HCT116 (cell line): ENCODE measurements at regions of chr17 and their contacts with region 1.

Region 1: DNA sequence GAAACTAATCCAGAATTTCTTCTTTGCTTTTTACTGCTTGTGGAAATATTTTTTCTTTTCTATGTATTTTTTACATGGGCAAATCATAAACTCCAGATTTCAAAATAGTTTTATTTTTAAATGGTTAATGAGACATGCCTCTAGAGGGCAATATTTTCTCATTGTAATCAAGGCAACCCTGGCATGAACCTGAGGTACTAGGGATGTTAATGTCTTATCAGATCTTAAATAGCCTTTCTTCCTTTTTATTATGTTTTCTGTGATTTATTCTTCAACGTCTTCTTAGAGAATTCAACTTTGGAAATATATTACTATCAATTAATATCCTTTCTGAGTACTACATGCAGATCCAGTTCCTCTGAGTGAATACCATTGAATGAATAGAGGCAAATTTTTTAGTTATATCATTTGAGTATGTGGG is 324.7 kb downstream of the BCAS3 start:
- DNase-seq: peak; percentile 26
- ATAC-seq: peak; percentile 69
- H3K4me3 ChIP-seq: no peak overlapping the region
- H3K27ac ChIP-seq: no peak overlapping the region
- H3K4me1 ChIP-seq: no peaks in the 10 kb centered on the region
- H3K27me3 ChIP-seq: no peaks in the 10 kb centered on the region
- CTCF ChIP-seq: peak; percentile 49 to 88 (median 77); a peak in 5 of 6 replicates
- POLR2A ChIP-seq: no peak
- RAD21 ChIP-seq: peak; percentile 88

Region 2: DNA sequence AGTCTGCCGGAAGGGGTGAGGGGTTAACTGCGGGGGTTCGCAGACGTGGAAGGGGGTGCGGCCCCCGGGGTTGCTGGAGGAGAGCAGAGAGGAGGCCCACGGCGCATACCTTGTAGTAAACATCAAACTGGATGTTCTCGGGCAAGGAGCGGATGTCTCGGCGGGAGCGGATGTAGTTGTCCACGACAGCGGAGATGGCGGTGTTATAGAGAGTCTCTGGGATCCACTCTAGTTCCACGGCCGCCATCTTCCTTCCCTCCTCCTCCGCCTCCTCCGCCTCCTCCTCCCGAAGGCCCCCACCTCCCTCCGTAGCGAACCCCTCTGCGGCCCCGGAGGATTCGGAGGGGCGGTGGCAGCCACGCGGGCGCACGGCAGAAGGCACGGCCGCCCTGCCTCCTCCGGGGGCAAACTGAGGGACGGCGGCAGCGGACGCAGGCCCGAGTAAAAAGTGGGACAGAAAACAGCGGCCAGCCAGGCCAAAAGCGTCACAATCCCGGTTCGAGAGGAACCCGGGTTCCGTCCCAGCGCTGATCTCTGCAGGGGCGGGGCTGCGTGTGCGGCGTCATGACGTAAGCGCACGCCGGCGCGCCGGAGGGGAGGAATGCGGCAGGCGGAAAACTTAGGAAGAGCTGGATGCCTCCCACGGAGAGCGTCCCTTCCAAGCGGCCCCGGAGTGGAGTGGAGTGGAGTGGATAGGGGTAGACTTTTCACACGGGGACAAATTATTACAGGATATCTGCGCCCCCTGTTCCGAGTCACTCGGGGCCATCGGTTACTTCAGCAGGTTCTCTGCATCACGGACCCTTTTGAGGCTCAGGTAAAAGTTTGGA is 476.4 kb before region 1 on chr17 and contains the start of gene APPBP2:
- CTCF ChIA-PET with region 1: no interaction called
- POLR2A ChIA-PET with region 1: no interaction called
- RAD21 ChIA-PET with region 1: no interaction called
- intact Hi-C with region 1: no loop called
- DNase-seq: peak; percentile 75
- ATAC-seq: peak; percentile 95
- H3K4me3 ChIP-seq: peak within 1 kb of the TSS; percentile 85 to 92
- H3K27ac ChIP-seq: peak within 1 kb of the TSS; percentile 91
- H3K4me1 ChIP-seq: peaks cover 9 to 17% of the 10 kb centered on the region in 2 experiments
- H3K27me3 ChIP-seq: no peaks in the 10 kb centered on the region
- CTCF ChIP-seq: no peak
- POLR2A ChIP-seq: peak; percentile 94
- RAD21 ChIP-seq: no peak
- total RNA-seq, gene APPBP2: 35.8 TPM

Region 3: GRCh38 chr17:61361084-61361483 is 358.8 kb after region 1 on chr17:
- CTCF ChIA-PET with region 1: no interaction called
- POLR2A ChIA-PET with region 1: no interaction called
- RAD21 ChIA-PET with region 1: no interaction called
- intact Hi-C with region 1: loop called (anchors 1 kb)
- DNase-seq: no peak
- ATAC-seq: no peak
- H3K4me3 ChIP-seq: no peak overlapping the region
- H3K27ac ChIP-seq: no peak overlapping the region
- H3K4me1 ChIP-seq: peaks cover 6 to 9% of the 10 kb centered on the region in 2 experiments
- H3K27me3 ChIP-seq: peaks cover 15% of the 10 kb centered on the region; the same call in 1 of the 2 replicates
- CTCF ChIP-seq: no peak
- POLR2A ChIP-seq: no peak
- RAD21 ChIP-seq: no peak

Region 4: DNA sequence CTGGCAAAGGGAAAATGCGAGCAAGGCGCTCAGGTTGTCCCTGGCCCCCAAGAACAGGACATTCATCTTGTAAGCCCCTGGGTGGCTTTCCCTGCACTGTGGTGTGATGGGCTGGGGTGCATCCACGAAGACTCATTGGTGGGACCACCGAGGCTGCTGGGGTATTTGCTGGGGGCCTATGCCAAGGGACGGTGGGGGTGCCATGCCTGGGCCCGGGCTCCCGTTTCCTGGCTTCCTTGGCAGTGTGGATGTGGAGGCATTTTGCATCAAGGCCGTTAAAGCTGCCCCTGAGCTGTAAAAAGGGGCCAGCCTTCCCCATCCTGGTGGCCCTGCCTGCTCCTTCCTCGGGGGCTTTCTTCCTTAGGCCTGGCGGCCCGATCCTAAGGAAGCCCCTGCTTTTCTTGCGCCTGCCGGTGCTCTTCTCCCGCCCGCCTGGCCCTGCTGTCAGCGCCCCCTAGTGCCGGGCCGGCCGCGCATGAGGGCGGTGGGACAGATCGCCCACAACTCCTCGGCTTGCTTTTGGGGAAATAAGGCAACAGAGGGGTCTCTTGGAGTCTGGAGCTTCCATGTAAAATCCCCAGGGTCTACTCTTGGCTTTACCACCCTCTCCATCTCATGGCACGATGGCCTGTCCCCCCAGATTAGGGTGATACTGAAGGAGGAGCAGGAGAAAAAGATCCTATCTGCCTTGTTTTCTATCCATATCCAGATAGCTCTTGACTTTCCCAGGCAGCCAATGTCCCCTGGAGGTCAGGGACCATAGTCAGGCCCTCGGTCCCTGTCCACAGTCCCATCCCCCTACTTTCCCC is 387.5 kb after region 1 on chr17:
- CTCF ChIA-PET with region 1: no interaction called
- POLR2A ChIA-PET with region 1: no interaction called
- RAD21 ChIA-PET with region 1: no interaction called
- intact Hi-C with region 1: loop called (anchors 1 kb)
- DNase-seq: no peak
- ATAC-seq: peak; percentile 84
- H3K4me3 ChIP-seq: no peak overlapping the region
- H3K27ac ChIP-seq: no peak overlapping the region
- H3K4me1 ChIP-seq: peaks cover 12 to 17% of the 10 kb centered on the region in 2 experiments; a peak in 3 of 4 replicates
- H3K27me3 ChIP-seq: no peaks in the 10 kb centered on the region
- CTCF ChIP-seq: peak; percentile 83 to 100 (median 100)
- POLR2A ChIP-seq: no peak
- RAD21 ChIP-seq: peak; percentile 94